ENCODE measurements at regions of chr5 and their contacts with region 1.

Region 1: GRCh38 chr5:148759101-148759500 is 67.3 kb upstream of the ADRB2 start:
- DNase-seq: peak in 2 of 3 donors; percentile 32 to 35
- H3K4me3 ChIP-seq: no peak overlapping the region
- H3K4me3 Mint-ChIP-seq: no peak overlapping the region
- H3K27ac ChIP-seq: peak overlapping the region; percentile 20 to 69
- H3K27ac Mint-ChIP-seq: peak overlapping the region in 3 of 7 donors; percentile 4 to 51 (median 35)
- H3K4me1 ChIP-seq: peaks cover 15 to 29% of the 10 kb centered on the region in 2 donors
- H3K4me1 Mint-ChIP-seq: peaks cover 34% of the 10 kb centered on the region
- H3K27me3 ChIP-seq: no peaks in the 10 kb centered on the region
- H3K27me3 Mint-ChIP-seq: no peaks in the 10 kb centered on the region
- CTCF ChIP-seq: no peak

Region 2: DNA sequence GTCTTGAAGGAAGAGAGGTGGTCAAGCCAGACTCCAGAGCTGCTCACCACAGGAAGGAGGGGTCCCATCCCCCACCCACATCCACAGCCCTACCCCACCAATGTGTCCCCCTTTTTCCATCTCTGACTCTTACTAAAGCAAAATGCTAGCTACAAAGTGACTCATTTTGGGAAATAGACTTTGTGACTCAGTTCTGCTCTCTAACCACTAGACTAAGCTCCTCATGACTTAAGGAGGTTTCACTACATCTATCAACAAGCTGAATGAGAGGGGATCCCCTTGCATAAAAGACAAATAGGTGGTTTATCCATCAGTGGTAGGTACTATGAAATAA is 32.2 kb after region 1 on chr5:
- intact Hi-C with region 1: loop called in 1 of 2 experiments (anchors 5 kb)
- DNase-seq: peak; percentile 55 to 90 (median 79)
- H3K4me3 ChIP-seq: no peak overlapping the region
- H3K4me3 Mint-ChIP-seq: no peak overlapping the region
- H3K27ac ChIP-seq: peak overlapping the region in 1 of 2 donors; percentile 61
- H3K27ac Mint-ChIP-seq: peak overlapping the region in 4 of 7 donors; percentile 37 to 72 (median 58)
- H3K4me1 ChIP-seq: peaks cover 44 to 55% of the 10 kb centered on the region in 2 donors
- H3K4me1 Mint-ChIP-seq: peaks cover 56% of the 10 kb centered on the region
- H3K27me3 ChIP-seq: no peaks in the 10 kb centered on the region
- H3K27me3 Mint-ChIP-seq: peaks cover 0 to 3% (median 0%) of the 10 kb centered on the region in 3 donors
- CTCF ChIP-seq: no peak

Measured in CD14-positive monocyte (primary cell).